ENCODE measurements at regions of chr1 and their contacts with region 1.

Region 1: GRCh38 chr1:46718727-46719622 is at the start of gene EFCAB14:
- DNase-seq: peak; percentile 98
- ATAC-seq: peak; percentile 97
- H3K4me3 ChIP-seq: peak within 1 kb of the TSS; percentile 100
- H3K27ac ChIP-seq: peak within 1 kb of the TSS; percentile 55
- H3K4me1 ChIP-seq: peaks cover 25% of the 10 kb centered on the region
- H3K27me3 ChIP-seq: no peaks in the 10 kb centered on the region
- CTCF ChIP-seq: no peak
- total RNA-seq, gene EFCAB14: 45.7 and 52.3 TPM in 2 replicates

Region 2: DNA sequence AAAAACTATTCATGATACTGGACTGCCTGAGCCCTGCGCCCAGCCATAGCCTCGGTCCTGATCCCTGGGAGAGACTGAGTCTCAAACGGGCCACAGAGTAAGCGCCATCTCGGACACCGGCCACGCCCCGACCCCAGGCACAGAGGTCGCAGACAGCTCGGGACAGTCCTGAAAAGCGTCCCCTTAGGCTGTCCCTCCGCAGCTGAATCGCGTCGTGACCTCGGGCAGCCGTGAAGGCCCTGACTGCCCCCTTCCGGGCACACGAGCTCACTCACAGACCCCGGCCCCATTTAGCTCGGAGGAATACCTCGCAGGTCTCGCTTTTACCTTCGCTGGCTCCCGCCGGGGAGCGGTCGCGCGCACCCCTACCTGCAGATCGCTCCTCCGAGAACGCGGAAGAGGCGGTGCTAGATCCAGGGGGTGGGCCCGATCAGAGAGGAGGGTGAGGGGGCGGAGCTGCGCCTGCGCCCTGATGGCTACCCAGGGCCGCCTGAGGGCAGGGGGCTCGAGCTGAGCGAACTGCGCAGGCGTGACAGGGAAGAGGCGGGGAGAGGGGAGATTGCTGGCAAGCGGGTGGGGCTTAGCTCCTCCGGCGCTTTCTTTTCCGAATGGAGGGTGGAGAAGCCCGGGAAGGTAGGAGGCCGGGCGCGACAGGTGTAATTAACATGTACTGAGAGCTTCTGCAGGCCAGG is 115.0 kb before region 1 on chr1 and contains the start of gene MKNK1:
- CTCF ChIA-PET with region 1: no interaction called
- POLR2A ChIA-PET with region 1: no interaction called
- intact Hi-C with region 1: loop called (anchors 5 kb)
- DNase-seq: peak; percentile 97
- ATAC-seq: peak; percentile 86
- H3K4me3 ChIP-seq: peak within 1 kb of the TSS; percentile 89
- H3K27ac ChIP-seq: no peak within 1 kb of the TSS
- H3K4me1 ChIP-seq: peaks cover 28% of the 10 kb centered on the region
- H3K27me3 ChIP-seq: no peaks in the 10 kb centered on the region
- CTCF ChIP-seq: no peak
- total RNA-seq, gene MKNK1: 36.1 and 36.8 TPM in 2 replicates

Region 3: DNA sequence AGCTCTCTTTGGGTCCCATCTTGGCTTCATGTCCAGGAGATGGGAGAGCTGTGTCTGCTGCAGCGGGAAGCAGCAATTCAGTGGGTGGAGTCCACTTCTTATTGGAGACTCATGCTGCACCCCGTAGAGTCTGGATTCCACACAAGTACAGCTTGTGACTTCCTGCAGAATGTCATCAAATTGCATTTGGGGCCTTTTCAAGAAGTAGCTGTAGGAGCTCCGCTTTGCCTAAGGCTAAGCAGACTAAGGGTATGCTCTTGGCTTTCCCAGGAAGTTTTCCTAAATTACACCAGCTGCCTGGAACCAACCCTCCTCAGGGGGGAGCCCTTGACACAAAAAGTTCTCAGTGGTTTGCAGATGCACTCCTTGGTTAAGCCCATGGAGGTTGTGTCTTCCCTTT is 96.6 kb before region 1 on chr1:
- CTCF ChIA-PET with region 1: no interaction called
- POLR2A ChIA-PET with region 1: no interaction called
- intact Hi-C with region 1: loop called (anchors 2 kb)
- DNase-seq: peak; percentile 64
- ATAC-seq: peak; percentile 66
- H3K4me3 ChIP-seq: peak overlapping the region; percentile 21; the same call in 1 of the 2 replicates
- H3K27ac ChIP-seq: peak overlapping the region; percentile 74
- H3K4me1 ChIP-seq: peaks cover 24% of the 10 kb centered on the region
- H3K27me3 ChIP-seq: no peaks in the 10 kb centered on the region
- CTCF ChIP-seq: peak; percentile 72

Region 4: DNA sequence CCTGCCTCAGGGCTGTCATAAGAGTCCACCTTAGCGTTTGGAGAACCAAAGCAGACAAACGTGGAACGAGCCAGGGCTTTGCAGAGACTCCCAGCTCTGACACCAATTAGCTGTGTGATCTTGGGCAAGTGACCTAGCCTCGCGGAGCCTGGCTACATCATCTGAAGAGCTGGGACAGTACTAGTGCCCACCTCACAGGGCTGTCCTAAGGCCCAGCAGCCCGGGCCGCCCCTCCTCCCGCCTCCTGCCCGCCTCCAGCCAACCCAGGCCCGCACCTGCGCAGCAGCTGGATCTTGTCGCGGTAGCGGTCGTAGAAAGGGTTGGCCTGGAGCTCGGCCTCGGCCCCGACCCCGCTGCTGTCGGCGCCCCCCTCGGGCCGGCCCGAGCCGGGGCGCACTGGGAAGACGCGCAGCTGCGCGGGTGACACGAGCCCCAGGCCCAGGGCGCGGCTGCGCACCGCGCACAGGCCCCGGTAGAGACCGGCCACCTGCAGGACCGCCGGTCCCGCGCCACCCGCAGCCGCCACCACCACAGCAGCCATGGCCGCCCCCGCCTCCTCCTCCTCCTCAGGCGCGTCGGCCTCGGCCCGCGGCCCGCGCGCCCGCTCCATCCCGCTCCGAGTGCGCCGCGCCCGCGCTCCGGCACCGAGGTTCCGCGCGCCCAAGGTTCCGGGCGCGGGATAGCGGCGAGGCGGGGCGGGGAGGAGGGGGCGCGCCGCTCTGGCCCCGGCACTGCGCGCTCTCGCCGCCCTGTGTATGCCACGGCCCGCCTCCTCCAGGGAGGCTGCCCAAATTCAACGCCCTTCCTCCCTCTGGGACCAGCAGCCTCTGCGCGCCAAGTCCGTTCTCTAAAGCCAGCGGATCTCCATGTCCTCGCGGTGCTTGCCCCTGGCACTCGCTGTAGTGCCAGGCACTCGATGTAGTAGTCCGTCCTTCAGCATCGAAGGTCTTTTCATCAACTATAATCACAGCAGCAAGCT is 50.9 kb before region 1 on chr1 and contains the start of gene ATPAF1:
- CTCF ChIA-PET with region 1: no interaction called
- POLR2A ChIA-PET with region 1: no interaction called
- intact Hi-C with region 1: loop called (anchors 2 kb)
- DNase-seq: peak; percentile 67
- ATAC-seq: peak; percentile 79
- H3K4me3 ChIP-seq: peak within 1 kb of the TSS; percentile 96
- H3K27ac ChIP-seq: no peak within 1 kb of the TSS
- H3K4me1 ChIP-seq: peaks cover 10% of the 10 kb centered on the region
- H3K27me3 ChIP-seq: no peaks in the 10 kb centered on the region
- CTCF ChIP-seq: no peak
- total RNA-seq, gene ATPAF1: 68.3 and 83.7 TPM in 2 replicates

Measured in PC-3 (cell line).